Breast epithelium (tissue), 4 donors: ENCODE measurements at regions of chr9 and their contacts with region 1.

Region 1: GRCh38 chr9:128764361-128764760 is 7.4 kb downstream of the ZER1 start:
- DNase-seq: no peak
- H3K4me3 ChIP-seq: no peak overlapping the region
- H3K27ac ChIP-seq: no peak overlapping the region
- H3K4me1 ChIP-seq: no peaks in the 10 kb centered on the region
- H3K27me3 ChIP-seq: no peaks in the 10 kb centered on the region
- CTCF ChIP-seq: no peak
- POLR2A ChIP-seq: no peak

Region 2: GRCh38 chr9:128094166-128094967 is 670.0 kb before region 1 on chr9:
- intact Hi-C with region 1: no loop called
- DNase-seq: peak; percentile 94 to 97
- H3K4me3 ChIP-seq: peak overlapping the region in 2 of 3 donors; percentile 33 to 52
- H3K27ac ChIP-seq: peak overlapping the region; percentile 97 to 98
- H3K4me1 ChIP-seq: peaks cover 27 to 45% of the 10 kb centered on the region in 2 donors
- H3K27me3 ChIP-seq: no peaks in the 10 kb centered on the region
- CTCF ChIP-seq: no peak
- POLR2A ChIP-seq: no peak

Region 3: DNA sequence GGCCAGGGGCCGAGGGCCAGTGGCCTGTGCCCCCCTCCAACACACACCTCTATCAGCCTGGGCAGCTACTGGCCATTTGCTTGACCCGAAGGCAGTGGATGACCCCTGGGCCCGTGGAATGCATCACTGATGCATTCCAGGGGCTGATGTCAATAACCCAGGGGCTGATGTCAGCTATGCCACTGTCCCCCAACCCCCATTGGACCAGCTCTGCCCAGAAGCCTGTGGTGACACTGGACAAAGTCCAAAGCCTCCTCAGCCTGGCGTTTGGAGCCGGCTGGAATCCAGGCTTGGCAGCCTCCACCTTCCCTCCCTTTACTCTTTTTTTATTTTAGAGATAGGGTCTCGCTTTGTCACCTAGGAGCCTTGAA is 111.4 kb after region 1 on chr9:
- intact Hi-C with region 1: no loop called
- DNase-seq: no peak
- H3K4me3 ChIP-seq: no peak overlapping the region
- H3K27ac ChIP-seq: peak overlapping the region; percentile 41 to 55
- H3K4me1 ChIP-seq: peaks cover 0 to 2% of the 10 kb centered on the region in 2 donors
- H3K27me3 ChIP-seq: no peaks in the 10 kb centered on the region
- CTCF ChIP-seq: no peak
- POLR2A ChIP-seq: no peak

Region 4: DNA sequence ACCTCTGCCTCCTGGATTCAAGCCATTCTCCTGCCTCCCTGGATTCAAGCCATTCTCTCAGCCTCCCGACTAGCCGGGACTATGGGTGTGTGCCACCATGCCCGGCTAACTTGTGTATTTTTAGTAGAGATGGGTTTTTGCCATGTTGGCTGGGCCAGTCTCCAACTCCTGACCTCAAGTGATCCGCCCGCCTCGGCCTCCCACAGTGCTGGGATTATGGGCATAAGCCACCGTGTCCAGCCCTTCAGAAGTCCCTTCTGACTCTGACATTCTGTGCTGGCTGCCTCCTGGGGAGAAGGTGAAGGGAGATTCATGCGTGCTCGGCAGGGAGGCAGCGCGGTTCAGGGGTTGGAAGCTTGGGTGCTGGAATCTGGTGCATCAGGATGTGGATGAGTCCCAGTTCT is 929.9 kb after region 1 on chr9:
- intact Hi-C with region 1: loop called (anchors 5 kb)
- DNase-seq: no peak
- H3K4me3 ChIP-seq: no peak overlapping the region
- H3K27ac ChIP-seq: peak overlapping the region; percentile 25 to 80
- H3K4me1 ChIP-seq: no peaks in the 10 kb centered on the region
- H3K27me3 ChIP-seq: no peaks in the 10 kb centered on the region
- CTCF ChIP-seq: no peak
- POLR2A ChIP-seq: no peak